MCF 10A (cell line): ENCODE measurements at regions of chr5 and their contacts with region 1.

Region 1: GRCh38 chr5:126499853-126500342 is 76.7 kb downstream of the GRAMD2B start:
- DNase-seq: peak; percentile 62
- H3K4me3 Mint-ChIP-seq: no peak overlapping the region
- H3K27ac Mint-ChIP-seq: no peak overlapping the region
- H3K4me1 Mint-ChIP-seq: peaks cover 28% of the 10 kb centered on the region
- H3K27me3 Mint-ChIP-seq: no peaks in the 10 kb centered on the region
- CTCF ChIP-seq: peak; percentile 51

Region 2: GRCh38 chr5:126513703-126514102 is 13.8 kb after region 1 on chr5:
- CTCF ChIA-PET with region 1: interaction called, 27 read pairs
- POLR2A ChIA-PET with region 1: interaction called, 23 read pairs
- intact Hi-C with region 1: no loop called
- DNase-seq: no peak
- H3K4me3 Mint-ChIP-seq: no peak overlapping the region
- H3K27ac Mint-ChIP-seq: no peak overlapping the region
- H3K4me1 Mint-ChIP-seq: peaks cover 23% of the 10 kb centered on the region
- H3K27me3 Mint-ChIP-seq: no peaks in the 10 kb centered on the region
- CTCF ChIP-seq: no peak